Activated T-helper 1 cell treated with anti-CD3 and anti-CD28 coated beads, Interleukin-12 subunit alpha, Interleukin-12 subunit beta, Interleukin-2, Interleukin-4 antibody, amounts not matched to agents 30 ng/mL and 10 ng/mL and 1 ng/mL, durations not matched to agents 14 hours and 24 hours and 36 hours (primary cell): ENCODE measurements at regions of chr10 and their contacts with region 1.

Region 1: DNA sequence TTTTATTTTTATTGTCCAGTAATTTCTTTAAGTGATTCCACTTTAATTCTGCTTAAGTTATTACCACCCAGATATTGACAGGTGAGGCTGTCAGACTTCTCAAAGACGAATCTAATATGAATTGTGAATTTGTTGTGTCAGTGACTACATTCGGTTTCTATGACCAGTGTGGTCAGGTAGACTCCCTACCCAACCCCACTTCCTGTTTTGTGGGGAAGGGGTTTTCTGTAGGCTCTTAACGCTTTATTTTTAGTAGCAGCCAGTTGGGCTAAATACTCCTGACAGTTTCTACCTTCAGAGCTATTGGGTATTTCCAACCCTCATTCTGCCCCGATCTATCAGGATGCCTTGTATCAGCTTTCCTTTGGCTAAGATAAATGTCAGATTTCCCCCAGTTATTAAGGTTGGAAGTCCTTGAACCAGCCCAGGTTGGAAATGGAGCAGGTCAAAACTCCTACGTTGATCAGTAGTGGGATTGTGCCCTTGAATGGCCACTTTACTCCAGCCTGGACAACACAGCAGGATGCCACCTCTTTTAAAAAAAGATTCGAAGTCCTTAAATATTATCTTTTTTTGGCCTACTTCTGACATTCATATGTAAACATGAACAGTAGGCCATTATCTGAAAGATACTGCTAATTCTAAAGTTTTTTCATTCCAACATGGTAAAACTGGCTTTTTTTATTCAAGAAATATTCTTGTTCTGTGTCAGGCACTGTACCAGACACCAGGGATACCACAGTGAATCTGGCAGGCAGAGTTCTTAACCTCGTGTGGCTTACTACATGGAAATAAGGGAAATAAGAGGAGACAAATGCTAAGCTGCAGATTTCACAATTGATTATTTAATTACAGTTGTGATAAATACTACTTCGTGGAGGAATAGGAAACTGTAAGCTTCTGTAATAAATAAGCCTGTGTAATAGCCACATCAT is 133.3 kb upstream of the SAMD8 start:
- DNase-seq: peak; percentile 68
- H3K4me3 Mint-ChIP-seq: peak overlapping the region; percentile 47
- H3K27ac Mint-ChIP-seq: peak overlapping the region; percentile 75
- H3K4me1 Mint-ChIP-seq: peaks cover 55% of the 10 kb centered on the region
- H3K27me3 Mint-ChIP-seq: no peaks in the 10 kb centered on the region

Region 2: GRCh38 chr10:74058658-74059057 is 919.5 kb before region 1 on chr10:
- intact Hi-C with region 1: loop called (anchors 5 kb)
- DNase-seq: no peak
- H3K4me3 Mint-ChIP-seq: no peak overlapping the region
- H3K27ac Mint-ChIP-seq: peak overlapping the region; percentile 18
- H3K4me1 Mint-ChIP-seq: peaks cover 45% of the 10 kb centered on the region
- H3K27me3 Mint-ChIP-seq: peaks cover 4% of the 10 kb centered on the region

Region 3: DNA sequence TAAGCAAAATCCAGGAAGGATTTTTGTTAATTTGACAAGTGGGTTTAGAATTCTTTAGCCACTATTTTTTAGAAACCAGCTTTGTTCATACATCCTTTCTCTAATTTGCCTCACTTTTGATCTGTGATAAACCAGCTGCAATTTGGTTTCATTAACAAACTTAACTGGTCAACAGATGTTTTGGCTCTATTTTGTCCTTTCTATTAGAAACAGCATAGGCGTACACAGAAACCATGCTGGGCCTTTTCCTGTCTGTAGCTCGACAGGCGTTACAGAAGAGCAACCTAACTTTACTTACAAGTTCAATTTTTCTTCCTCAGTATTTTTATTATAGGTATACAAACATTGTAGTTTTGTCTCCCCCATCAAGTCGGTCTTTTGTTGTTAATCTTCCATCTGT is 123.6 kb before region 1 on chr10:
- intact Hi-C with region 1: loop called (anchors 1 kb)
- DNase-seq: no peak
- H3K4me3 Mint-ChIP-seq: peak overlapping the region; percentile 51
- H3K27ac Mint-ChIP-seq: peak overlapping the region; percentile 80
- H3K4me1 Mint-ChIP-seq: peaks cover 31% of the 10 kb centered on the region
- H3K27me3 Mint-ChIP-seq: no peaks in the 10 kb centered on the region

Region 4: GRCh38 chr10:74871595-74872382 is 106.4 kb before region 1 on chr10:
- intact Hi-C with region 1: loop called (anchors 1 kb)
- DNase-seq: no peak
- H3K4me3 Mint-ChIP-seq: peak overlapping the region; percentile 76
- H3K27ac Mint-ChIP-seq: peak overlapping the region; percentile 81
- H3K4me1 Mint-ChIP-seq: peaks cover 27% of the 10 kb centered on the region
- H3K27me3 Mint-ChIP-seq: no peaks in the 10 kb centered on the region

Region 5: GRCh38 chr10:75042292-75042974 is 64.3 kb after region 1 on chr10:
- intact Hi-C with region 1: loop called (anchors 2 kb)
- DNase-seq: no peak
- H3K4me3 Mint-ChIP-seq: peak overlapping the region; percentile 19
- H3K27ac Mint-ChIP-seq: peak overlapping the region; percentile 91
- H3K4me1 Mint-ChIP-seq: peaks cover 41% of the 10 kb centered on the region
- H3K27me3 Mint-ChIP-seq: no peaks in the 10 kb centered on the region

Region 6: GRCh38 chr10:75108684-75109458 is 130.7 kb after region 1 on chr10:
- intact Hi-C with region 1: no loop called
- DNase-seq: no peak
- H3K4me3 Mint-ChIP-seq: no peak overlapping the region
- H3K27ac Mint-ChIP-seq: peak overlapping the region; percentile 81
- H3K4me1 Mint-ChIP-seq: peaks cover 36% of the 10 kb centered on the region
- H3K27me3 Mint-ChIP-seq: no peaks in the 10 kb centered on the region